Upper lobe of right lung (tissue), 1 donor: ENCODE measurements at regions of chr12 and their contacts with region 1.

Region 1: DNA sequence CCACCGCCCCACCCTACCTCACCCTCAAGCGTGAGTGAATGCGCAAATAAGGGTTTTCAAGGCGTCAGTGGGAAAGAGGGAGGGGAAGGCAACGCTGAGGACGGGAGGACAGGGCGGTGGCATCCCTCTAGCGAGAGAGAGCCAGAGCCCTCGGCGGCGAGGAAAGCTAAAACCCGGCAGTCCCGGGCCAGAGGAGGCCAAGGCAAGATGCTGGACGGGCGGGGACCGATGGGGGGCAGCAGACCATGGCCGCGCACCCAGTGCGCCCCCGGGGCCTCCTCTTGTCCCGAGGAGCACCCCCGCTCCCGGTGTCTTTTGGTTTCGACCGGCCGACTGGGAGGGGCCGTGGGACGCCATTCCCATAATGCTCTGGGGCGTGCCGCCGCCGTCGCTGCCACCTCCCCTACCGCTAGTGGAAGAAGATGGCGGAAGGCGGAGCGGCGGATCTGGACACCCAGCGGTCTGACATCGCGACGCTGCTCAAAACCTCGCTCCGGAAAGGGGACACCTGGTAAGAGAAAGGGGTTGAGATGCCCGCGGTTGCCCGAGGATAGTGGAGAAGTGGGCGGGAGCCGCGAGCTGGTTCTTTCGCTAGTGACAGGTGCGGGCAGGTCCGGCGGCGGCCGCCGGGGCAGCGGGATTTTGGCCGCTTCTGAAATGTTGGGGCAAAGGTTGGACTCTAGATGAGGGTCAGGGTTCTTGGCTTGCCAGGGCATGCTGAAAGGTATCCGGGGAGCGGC is at the start of gene USP15:
- DNase-seq: peak; percentile 98
- ATAC-seq: peak; percentile 98
- H3K4me3 ChIP-seq: peak within 1 kb of the TSS; percentile 96
- H3K27ac ChIP-seq: peak within 1 kb of the TSS; percentile 96
- H3K4me1 ChIP-seq: peaks cover 41% of the 10 kb centered on the region
- H3K27me3 ChIP-seq: no peaks in the 10 kb centered on the region
- CTCF ChIP-seq: peak; percentile 80
- total RNA-seq, gene USP15: 87.3 TPM

Region 2: DNA sequence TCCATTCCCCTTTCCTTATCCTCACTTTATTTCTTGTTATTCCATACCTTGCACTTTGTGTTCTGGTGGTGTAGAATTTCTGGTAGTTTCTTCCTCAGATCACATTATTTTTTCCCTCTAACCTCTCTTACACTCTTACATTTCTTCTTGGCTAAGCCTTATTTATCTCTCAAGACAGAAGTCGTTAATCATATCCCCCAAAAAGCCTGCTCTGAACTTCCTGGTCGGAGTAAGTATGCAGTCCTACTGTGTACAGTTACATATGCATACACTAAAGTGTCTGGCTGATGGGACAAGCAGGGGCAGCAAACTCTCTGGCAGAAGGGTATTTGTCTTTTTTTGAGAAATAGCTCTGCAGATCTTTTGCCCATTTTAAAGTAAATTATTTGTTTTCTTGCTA is 33.1 kb before region 1 on chr12:
- intact Hi-C with region 1: no loop called
- DNase-seq: no peak
- ATAC-seq: no peak
- H3K4me3 ChIP-seq: no peak overlapping the region
- H3K27ac ChIP-seq: no peak overlapping the region
- H3K4me1 ChIP-seq: no peaks in the 10 kb centered on the region
- H3K27me3 ChIP-seq: no peaks in the 10 kb centered on the region
- CTCF ChIP-seq: no peak

Region 3: DNA sequence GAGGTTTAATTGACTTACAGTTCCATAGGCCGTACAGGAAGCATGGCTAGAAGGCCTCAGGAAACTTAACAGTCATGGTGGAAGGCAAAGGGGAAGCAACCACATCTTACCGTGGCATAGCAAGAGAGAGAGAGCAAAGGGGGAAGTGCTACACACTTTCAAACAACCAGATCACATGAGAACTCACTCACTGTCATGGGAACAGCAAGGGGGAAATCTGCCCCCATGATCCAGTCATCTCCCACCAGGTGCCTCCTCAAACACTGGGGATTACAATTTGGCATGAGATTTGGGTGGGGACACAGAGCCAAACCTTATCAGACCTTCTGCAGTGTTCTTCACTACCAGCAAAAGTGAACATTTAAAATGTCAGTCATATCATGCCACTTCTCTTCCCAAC is 58.9 kb after region 1 on chr12:
- intact Hi-C with region 1: loop called (anchors 10 kb)
- DNase-seq: no peak
- ATAC-seq: peak; percentile 65
- H3K4me3 ChIP-seq: no peak overlapping the region
- H3K27ac ChIP-seq: no peak overlapping the region
- H3K4me1 ChIP-seq: no peaks in the 10 kb centered on the region
- H3K27me3 ChIP-seq: no peaks in the 10 kb centered on the region
- CTCF ChIP-seq: no peak